Posterior cingulate gyrus (tissue), 11 donors: ENCODE measurements at regions of chr16 and their contacts with region 1.

Region 1: GRCh38 chr16:66872943-66873684 is 7.2 kb upstream of the PDP2 start:
- DNase-seq: peak; percentile 79 to 98 (median 92)

Region 2: DNA sequence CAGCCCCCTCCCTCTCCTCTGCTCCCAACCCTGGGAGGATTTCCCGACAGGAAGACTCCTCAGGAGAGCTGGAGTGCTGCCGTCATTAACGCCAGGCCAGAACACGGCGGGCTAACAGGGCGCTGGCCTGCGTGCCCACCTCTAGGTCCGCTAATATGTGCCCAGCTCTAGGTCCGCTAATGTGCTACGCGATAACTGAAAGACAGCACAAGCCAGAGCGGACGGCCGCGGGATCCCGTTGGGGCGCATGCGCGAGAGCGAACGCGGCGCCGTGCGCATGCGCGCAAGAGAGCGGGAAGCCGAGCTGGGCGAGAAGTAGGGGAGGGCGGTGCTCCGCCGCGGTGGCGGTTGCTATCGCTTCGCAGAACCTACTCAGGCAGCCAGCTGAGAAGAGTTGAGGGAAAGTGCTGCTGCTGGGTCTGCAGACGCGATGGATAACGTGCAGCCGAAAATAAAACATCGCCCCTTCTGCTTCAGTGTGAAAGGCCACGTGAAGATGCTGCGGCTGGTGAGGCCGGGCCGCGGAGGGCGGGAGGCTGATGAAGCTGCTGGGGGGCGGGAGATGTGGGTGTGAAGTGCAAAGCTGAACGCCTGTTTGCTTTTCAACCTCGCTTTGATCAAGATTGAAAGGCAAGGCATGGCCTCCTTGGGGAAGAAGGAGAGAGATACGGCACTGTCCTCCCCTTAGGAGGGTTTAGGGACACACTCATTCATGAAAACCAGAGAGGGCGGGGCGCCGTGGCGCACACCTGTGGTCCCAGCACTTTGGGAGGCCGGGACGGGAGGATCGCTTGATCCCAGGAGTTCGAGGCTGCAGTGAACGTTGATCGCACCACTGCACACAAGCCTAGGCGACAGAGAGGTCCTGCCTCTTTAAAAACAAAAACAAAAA is 320.6 kb before region 1 on chr16 and contains the start of gene CKLF:
- intact Hi-C with region 1: loop called (anchors 5 kb)
- DNase-seq: peak; percentile 80 to 98 (median 86)

Region 3: DNA sequence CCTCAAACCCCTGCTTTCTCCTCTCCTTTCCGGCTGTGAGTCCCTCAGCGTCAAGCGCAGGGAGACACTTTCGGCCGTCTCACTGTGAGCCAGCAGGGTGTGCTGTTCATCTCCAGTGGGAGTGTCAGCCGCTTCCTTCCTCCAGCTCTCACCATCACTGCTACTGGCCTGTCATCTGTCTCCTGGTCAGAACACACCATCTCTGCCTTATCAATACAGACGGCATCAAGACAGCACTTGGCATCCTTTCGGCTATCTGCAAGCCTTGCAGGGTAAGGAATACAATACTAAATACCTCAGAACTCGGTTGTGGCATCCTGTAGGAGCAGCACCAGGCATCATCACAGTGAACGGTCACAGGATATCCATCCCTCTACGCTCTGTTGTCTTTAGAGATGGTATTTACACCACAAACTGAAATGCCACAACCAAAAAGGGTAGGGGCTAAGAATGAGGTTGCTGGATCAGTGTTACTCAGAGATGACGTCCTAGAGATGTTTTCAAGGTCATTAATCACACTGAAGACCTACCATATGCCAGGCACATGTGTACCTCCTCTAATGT is 155.9 kb before region 1 on chr16:
- intact Hi-C with region 1: loop called (anchors 1 kb)
- DNase-seq: peak in 9 of 10 donors; percentile 31 to 93 (median 63)

Region 4: GRCh38 chr16:66830422-66831404 is 42.4 kb before region 1 on chr16 and contains the start of gene NAE1:
- intact Hi-C with region 1: loop called (anchors 5 kb)
- DNase-seq: peak; percentile 72 to 97 (median 81)